ENCODE measurements at regions of chr13 and their contacts with region 1.

Region 1: DNA sequence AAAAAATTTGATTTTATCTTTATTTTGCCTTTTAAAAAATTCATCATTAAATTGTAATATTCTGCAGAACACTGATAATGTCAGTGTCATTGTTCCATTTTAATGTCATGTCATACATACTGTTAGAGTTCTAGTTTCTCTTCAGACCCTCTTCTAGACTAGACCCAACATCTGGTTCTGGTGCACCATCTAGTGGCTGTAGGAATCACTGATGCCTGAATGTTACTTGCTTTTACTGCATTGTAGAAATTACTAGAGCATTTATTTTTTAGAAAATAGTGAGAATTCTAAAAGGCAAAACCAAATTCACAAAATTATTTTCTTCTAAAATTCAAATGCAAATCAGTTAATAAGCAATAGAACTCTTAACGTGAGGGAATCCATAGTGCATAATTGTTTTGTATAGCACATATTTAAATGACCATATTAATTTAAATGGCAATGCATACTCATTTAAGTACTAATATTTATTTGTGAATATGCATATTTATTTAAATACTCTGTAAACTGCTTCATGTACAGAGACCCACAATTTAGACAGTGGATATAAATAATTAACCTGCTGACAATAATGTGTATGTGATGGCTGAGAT is 425.7 kb downstream of the KLF12 start:
- DNase-seq: peak; percentile 88
- H3K4me3 Mint-ChIP-seq: no peak overlapping the region
- H3K27ac Mint-ChIP-seq: no peak overlapping the region
- H3K4me1 Mint-ChIP-seq: peaks cover 7% of the 10 kb centered on the region
- H3K27me3 Mint-ChIP-seq: no peaks in the 10 kb centered on the region

Region 2: DNA sequence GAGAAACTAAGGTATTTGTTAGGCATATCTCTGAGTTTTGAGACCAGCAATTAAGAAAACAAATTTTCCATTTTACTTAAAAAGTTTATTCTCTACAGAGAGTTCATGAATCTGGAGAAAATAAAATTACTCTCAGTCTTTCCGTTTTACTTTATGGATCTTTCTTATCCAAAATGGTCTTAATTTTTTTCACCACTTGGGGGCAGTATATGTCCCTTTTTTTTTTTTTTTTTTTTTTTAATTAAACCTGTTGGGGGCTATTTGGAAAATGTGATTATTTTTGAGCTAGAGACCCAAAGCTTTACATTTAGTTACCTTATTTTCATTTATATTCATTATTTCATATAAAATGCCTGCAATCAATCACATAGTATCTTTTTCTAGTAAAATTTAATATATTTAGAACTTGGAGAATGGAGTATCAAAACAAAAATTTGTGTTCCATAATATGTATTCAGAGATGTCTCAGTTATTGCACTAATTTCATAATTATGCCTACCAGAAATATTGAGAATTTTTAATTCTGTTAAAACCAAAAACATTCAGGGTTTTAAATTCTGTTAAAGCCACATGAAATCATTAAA is 899.5 kb before region 1 on chr13:
- intact Hi-C with region 1: loop called (anchors 10 kb)
- DNase-seq: no peak
- H3K4me3 Mint-ChIP-seq: no peak overlapping the region
- H3K27ac Mint-ChIP-seq: no peak overlapping the region
- H3K4me1 Mint-ChIP-seq: peaks cover 2% of the 10 kb centered on the region
- H3K27me3 Mint-ChIP-seq: no peaks in the 10 kb centered on the region

Region 3: DNA sequence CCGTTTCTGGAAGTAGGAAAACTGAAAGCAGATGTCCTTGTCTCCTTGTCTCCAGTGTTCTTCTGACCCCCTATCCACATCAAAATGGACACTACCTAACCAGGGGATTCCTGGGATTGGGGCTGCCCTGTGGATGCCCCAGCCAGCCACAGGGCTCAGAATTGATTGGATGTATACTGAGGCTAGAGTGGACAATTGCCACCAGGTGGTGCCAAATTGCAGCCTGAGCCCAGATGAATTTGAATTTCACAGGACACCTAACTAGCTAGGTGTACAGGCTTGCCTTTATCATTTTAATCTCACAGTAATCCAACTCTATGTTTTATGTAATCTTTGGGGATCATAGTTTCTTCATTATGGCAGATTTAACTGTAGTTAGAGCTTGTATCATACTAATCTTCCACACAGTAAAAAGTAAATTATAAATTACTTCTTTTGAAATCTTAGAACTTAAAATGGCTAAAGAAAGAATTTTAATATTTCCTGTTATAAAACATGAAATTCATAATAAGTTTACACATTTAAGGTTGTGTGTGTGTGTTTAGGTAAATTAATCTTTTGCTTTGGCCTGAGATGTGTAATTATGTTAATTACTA is 868.6 kb before region 1 on chr13:
- intact Hi-C with region 1: loop called (anchors 1 kb)
- DNase-seq: peak; percentile 79
- H3K4me3 Mint-ChIP-seq: no peak overlapping the region
- H3K27ac Mint-ChIP-seq: no peak overlapping the region
- H3K4me1 Mint-ChIP-seq: peaks cover 4% of the 10 kb centered on the region
- H3K27me3 Mint-ChIP-seq: no peaks in the 10 kb centered on the region

Region 4: DNA sequence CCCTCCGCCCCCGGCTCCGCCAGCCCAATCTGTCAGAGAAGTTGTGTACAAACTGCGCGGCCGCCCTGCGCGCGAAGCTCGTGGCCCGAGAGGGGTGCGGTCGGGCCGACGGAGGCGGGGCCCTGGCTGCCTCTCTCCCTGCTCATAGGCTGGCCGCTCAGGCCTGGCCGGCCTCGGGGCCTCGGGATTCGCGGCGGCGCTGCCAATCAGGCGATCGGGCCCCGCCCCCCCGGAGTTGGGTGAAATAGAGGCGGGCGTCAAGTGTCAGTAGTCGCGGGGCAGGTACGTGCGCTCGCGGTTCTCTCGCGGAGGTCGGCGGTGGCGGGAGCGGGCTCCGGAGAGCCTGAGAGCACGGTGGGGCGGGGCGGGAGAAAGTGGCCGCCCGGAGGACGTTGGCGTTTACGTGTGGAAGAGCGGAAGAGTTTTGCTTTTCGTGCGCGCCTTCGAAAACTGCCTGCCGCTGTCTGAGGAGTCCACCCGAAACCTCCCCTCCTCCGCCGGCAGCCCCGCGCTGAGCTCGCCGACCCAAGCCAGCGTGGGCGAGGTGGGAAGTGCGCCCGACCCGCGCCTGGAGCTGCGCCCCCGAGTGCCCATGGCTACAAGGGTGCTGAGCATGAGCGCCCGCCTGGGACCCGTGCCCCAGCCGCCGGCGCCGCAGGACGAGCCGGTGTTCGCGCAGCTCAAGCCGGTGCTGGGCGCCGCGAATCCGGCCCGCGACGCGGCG is 649.6 kb before region 1 on chr13 and contains the start of gene KLF5:
- intact Hi-C with region 1: loop called (anchors 2 kb)
- DNase-seq: peak; percentile 99
- H3K4me3 Mint-ChIP-seq: peak within 1 kb of the TSS; percentile 86
- H3K27ac Mint-ChIP-seq: peak within 1 kb of the TSS; percentile 83
- H3K4me1 Mint-ChIP-seq: peaks cover 20% of the 10 kb centered on the region
- H3K27me3 Mint-ChIP-seq: peaks cover 49% of the 10 kb centered on the region
- total RNA-seq, gene KLF5: 2.0 and 2.8 TPM in 2 replicates

Region 5: DNA sequence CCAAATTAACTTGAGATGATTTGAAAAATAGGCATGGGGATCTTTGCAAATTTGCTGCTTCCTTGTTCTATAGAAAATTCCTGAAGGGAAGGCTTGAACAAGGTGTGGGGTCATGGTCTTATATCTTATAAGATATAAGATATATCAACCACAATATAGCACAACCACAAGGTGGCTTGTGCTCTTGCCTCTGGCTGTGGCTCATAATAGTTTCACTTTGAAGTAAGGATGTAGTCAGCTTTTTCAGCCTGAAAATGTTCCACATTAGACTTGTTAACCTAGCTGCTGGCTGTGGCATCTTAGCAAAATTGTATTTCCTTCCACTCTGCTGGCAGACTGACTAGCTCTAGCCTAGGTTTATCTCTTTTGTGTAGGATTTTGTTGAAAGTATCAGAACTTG is 479.9 kb before region 1 on chr13:
- intact Hi-C with region 1: loop called (anchors 2 kb)
- DNase-seq: peak; percentile 78
- H3K4me3 Mint-ChIP-seq: no peak overlapping the region
- H3K27ac Mint-ChIP-seq: no peak overlapping the region
- H3K4me1 Mint-ChIP-seq: peaks cover 27% of the 10 kb centered on the region
- H3K27me3 Mint-ChIP-seq: peaks cover 4% of the 10 kb centered on the region

Region 6: DNA sequence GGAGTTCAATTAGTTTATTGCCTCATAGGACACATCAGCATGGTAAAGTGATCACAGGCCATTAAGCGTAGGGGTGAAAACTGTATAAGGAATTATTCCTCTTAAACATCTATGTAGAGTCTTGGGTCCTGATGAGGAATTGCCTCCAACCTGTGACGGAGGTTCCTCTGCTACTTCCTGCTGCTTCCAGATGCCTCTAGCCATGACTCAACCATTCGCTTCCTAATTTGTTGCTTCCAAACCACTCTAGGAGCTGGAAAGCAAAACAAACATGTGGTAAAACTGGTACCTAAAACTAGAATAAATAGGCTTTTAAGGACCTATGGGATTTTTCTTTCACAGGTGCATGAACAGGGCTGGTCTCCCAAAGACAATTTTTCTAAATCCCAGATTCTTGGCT is 171.9 kb after region 1 on chr13:
- intact Hi-C with region 1: no loop called
- DNase-seq: no peak
- H3K4me3 Mint-ChIP-seq: no peak overlapping the region
- H3K27ac Mint-ChIP-seq: no peak overlapping the region
- H3K4me1 Mint-ChIP-seq: peaks cover 10% of the 10 kb centered on the region
- H3K27me3 Mint-ChIP-seq: no peaks in the 10 kb centered on the region